ENCODE measurements at regions of chr5 and their contacts with region 1.

Region 1: DNA sequence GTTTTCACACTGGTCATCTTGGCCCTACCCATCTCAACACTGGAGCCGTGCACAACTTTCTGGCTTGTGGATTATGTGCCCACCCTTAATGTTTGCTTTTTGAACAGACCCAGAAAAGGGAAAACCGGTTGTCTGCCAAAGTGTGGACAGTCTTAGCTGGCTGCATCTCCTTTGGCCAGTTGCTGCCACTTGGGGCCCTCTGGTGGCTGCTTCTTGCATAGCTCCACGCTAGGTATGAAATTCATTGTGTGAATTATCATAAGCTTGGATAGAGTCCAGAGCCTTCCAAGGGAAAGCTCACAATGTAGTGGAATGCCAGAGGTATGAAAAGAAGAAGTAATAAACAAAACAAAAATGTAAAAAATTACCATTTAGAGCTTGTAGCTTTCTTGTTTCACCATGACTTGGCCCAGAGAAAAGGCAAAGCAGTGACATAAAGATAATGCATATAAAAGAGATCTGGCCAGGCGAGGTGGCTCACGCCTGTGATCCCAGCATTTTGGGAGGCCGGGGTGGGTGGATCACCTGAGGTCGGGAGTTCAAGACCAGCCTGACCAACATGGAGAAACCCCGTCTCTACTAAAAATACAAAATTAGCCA is 12.5 kb upstream of the SLC36A3 start:
- DNase-seq: peak; percentile 80
- ATAC-seq: peak; percentile 66
- H3K4me3 Mint-ChIP-seq: no peak overlapping the region
- H3K27ac Mint-ChIP-seq: no peak overlapping the region
- H3K4me1 Mint-ChIP-seq: no peaks in the 10 kb centered on the region
- H3K27me3 Mint-ChIP-seq: peaks cover 11% of the 10 kb centered on the region

Region 2: DNA sequence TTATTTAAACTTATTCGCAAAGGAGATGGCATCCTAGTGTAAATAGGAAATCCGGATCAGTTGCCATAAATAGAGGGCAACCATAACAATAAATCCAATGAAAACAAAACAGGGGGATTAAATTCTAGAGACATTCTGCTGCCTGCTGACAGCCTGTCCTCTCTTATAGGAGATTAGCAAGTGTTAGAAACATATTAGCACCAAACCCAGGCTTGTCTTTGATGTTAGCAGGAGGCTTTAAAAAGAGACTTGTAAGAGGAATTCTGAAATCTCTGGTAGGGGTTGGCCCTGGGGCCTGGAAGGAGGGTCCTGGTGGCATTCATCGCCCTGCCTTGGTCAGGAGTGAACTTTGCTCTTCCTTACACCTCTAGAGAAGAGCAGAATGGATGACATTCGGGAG is 786.5 kb before region 1 on chr5:
- CTCF ChIA-PET with region 1: no interaction called
- POLR2A ChIA-PET with region 1: no interaction called
- intact Hi-C with region 1: no loop called
- DNase-seq: no peak
- ATAC-seq: no peak
- H3K4me3 Mint-ChIP-seq: no peak overlapping the region
- H3K27ac Mint-ChIP-seq: no peak overlapping the region
- H3K4me1 Mint-ChIP-seq: no peaks in the 10 kb centered on the region
- H3K27me3 Mint-ChIP-seq: no peaks in the 10 kb centered on the region

Region 3: DNA sequence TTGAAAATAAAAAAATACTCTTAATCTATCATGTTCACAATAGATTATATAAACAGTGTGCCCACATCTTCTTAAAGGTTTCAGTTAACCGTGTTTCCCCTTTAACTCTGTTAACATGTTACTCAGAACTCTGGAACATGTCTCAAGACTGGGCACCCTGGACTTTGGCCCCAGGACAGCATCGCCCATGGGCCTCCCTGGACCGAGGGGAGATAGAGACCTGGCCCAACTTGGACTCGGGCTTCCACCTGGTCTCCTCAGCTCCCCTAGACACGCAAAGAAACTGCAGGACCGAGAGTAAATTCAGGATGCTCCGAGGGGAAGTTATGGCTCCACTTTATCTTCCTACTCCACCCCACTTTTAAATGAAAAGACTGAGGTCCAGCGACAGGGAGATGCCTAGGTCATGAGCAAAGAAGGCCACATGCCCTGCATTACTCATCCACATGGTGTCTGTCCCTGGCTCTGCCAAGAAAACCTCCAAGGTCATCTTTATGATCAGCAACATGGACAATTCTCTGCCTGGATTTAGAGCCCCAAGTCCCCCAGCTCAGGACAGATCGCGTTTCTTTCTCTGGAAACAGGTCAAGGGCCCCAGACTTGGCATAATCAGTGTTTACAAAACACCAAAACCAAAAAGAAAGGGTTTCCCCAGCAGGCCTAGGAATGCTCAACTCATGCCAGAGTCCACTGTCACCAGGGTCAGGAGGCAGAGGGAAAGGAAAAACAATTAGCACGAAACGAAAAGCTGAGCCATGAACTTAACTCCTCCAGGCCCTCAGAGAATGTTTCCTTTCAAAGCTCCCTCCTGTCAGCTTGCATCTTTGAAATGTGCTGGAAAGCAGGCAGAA is 278.3 kb before region 1 on chr5:
- CTCF ChIA-PET with region 1: no interaction called
- POLR2A ChIA-PET with region 1: no interaction called
- intact Hi-C with region 1: no loop called
- DNase-seq: peak; percentile 0
- ATAC-seq: no peak
- H3K4me3 Mint-ChIP-seq: no peak overlapping the region
- H3K27ac Mint-ChIP-seq: no peak overlapping the region
- H3K4me1 Mint-ChIP-seq: peaks cover 19% of the 10 kb centered on the region
- H3K27me3 Mint-ChIP-seq: no peaks in the 10 kb centered on the region

Region 4: GRCh38 chr5:151284392-151284967 is 31.6 kb before region 1 on chr5:
- CTCF ChIA-PET with region 1: interaction called, 15 read pairs
- POLR2A ChIA-PET with region 1: no interaction called
- intact Hi-C with region 1: loop called (anchors 1 to 5 kb)
- DNase-seq: peak; percentile 51
- ATAC-seq: no peak
- H3K4me3 Mint-ChIP-seq: no peak overlapping the region
- H3K27ac Mint-ChIP-seq: no peak overlapping the region
- H3K4me1 Mint-ChIP-seq: no peaks in the 10 kb centered on the region
- H3K27me3 Mint-ChIP-seq: peaks cover 2% of the 10 kb centered on the region

Region 5: DNA sequence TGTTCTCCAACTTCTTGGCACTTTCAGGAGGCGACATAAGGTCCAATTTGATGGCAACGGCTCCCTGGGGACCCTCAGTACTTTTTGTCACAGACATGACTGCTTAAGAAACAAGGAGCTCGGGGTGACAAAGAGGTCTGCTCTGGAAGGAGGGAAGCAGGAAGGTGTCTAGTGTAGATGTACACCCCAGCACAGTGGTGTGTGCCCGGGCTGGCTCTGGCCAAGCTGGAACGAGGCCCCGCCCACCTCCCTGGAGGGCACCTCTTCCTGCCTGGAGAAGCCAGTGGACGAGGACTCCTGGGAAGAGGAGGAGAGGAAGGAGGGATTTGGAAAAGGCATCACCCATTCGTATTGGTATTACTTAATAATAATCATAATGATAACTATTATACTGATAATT is 31.3 kb after region 1 on chr5 and contains the start of gene SLC36A2:
- CTCF ChIA-PET with region 1: interaction called, 10 read pairs
- POLR2A ChIA-PET with region 1: no interaction called
- intact Hi-C with region 1: no loop called
- DNase-seq: no peak
- ATAC-seq: no peak
- H3K4me3 Mint-ChIP-seq: no peak within 1 kb of the TSS
- H3K27ac Mint-ChIP-seq: no peak within 1 kb of the TSS
- H3K4me1 Mint-ChIP-seq: no peaks in the 10 kb centered on the region
- H3K27me3 Mint-ChIP-seq: peaks cover 23% of the 10 kb centered on the region
- total RNA-seq, gene SLC36A2: not detected

Region 6: GRCh38 chr5:151499501-151500035 is 183.5 kb after region 1 on chr5:
- CTCF ChIA-PET with region 1: no interaction called
- POLR2A ChIA-PET with region 1: no interaction called
- intact Hi-C with region 1: loop called in 1 of 2 experiments (anchors 5 kb)
- DNase-seq: no peak
- ATAC-seq: no peak
- H3K4me3 Mint-ChIP-seq: no peak overlapping the region
- H3K27ac Mint-ChIP-seq: no peak overlapping the region
- H3K4me1 Mint-ChIP-seq: peaks cover 4% of the 10 kb centered on the region
- H3K27me3 Mint-ChIP-seq: no peaks in the 10 kb centered on the region

Measured in activated CD4-positive, alpha-beta T cell treated with anti-CD3 and anti-CD28 coated beads for 36 hours (primary cell).